OCI-LY7 (cell line): ENCODE measurements at regions of chr9 and their contacts with region 1.

Region 1: GRCh38 chr9:98287383-98287782 is 31.9 kb upstream of the TBC1D2 start:
- DNase-seq: peak; percentile 6
- H3K4me3 ChIP-seq: no peak overlapping the region
- H3K27ac ChIP-seq: no peak overlapping the region
- H3K4me1 ChIP-seq: no peaks in the 10 kb centered on the region
- CTCF ChIP-seq: no peak

Region 2: DNA sequence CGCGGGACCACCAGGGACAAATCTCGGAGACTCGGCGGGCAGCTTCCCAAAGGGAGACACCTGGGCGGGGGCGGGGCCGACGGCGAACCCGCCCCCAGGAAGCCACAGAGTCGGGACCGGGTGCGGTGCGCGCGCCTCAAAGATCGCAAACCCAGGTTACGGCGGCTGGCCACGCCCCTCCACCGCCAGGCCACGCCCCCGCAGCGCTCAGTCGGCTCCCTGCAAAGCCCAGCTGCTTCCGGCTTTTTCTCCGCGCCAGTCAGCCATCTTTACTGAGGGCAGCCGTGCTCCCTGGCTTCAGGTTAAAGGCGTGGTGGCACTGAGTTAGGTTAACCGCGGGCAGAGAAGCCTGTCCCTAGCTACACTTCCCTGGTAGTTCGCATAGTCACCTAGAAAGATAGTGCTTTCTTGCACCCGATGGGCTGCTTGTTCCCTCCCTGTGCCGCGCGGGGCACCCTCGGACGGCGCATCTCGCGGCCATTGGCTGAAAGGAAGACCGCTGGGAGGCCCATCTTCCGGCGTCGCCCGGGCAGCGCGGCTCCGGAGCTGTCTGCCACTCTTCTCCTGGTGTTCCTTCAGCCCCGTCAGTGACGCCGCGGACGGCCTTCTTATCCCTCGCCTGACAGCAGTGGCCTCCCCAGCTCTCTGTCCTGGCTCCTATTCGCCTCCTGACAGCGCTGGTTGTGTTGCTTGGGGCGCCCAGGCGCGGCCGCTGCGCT is 31.6 kb before region 1 on chr9 and contains the start of gene TBC1D2:
- CTCF ChIA-PET with region 1: interaction called, 14 read pairs
- POLR2A ChIA-PET with region 1: no interaction called
- intact Hi-C with region 1: no loop called
- DNase-seq: peak; percentile 95
- H3K4me3 ChIP-seq: peak within 1 kb of the TSS; percentile 75
- H3K27ac ChIP-seq: peak within 1 kb of the TSS; percentile 85
- H3K4me1 ChIP-seq: peaks cover 17% of the 10 kb centered on the region
- CTCF ChIP-seq: peak; percentile 51; the same call in 1 of the 2 replicates
- total RNA-seq, gene TBC1D2: 2.5 and 5.5 TPM in 2 replicates

Region 3: GRCh38 chr9:98347642-98348041 is 60.3 kb after region 1 on chr9:
- CTCF ChIA-PET with region 1: no interaction called
- POLR2A ChIA-PET with region 1: no interaction called
- intact Hi-C with region 1: no loop called
- DNase-seq: no peak
- H3K4me3 ChIP-seq: no peak overlapping the region
- H3K27ac ChIP-seq: no peak overlapping the region
- H3K4me1 ChIP-seq: no peaks in the 10 kb centered on the region
- CTCF ChIP-seq: no peak